Activated CD4-positive, alpha-beta T cell treated with anti-CD3 and anti-CD28 coated beads for 36 hours (primary cell): ENCODE measurements at regions of chr1 and their contacts with region 1.

Region 1: GRCh38 chr1:66607458-66607857 is 73.5 kb downstream of the SGIP1 start:
- DNase-seq: peak; percentile 25
- ATAC-seq: no peak
- H3K4me3 Mint-ChIP-seq: no peak overlapping the region
- H3K27ac Mint-ChIP-seq: no peak overlapping the region
- H3K4me1 Mint-ChIP-seq: no peaks in the 10 kb centered on the region
- H3K27me3 Mint-ChIP-seq: peaks cover 12% of the 10 kb centered on the region

Region 2: GRCh38 chr1:64956733-64957441 is 1650.6 kb before region 1 on chr1:
- CTCF ChIA-PET with region 1: no interaction called
- POLR2A ChIA-PET with region 1: no interaction called
- intact Hi-C with region 1: no loop called
- DNase-seq: peak; percentile 75
- ATAC-seq: peak; percentile 87
- H3K4me3 Mint-ChIP-seq: no peak overlapping the region
- H3K27ac Mint-ChIP-seq: no peak overlapping the region
- H3K4me1 Mint-ChIP-seq: peaks cover 61% of the 10 kb centered on the region
- H3K27me3 Mint-ChIP-seq: no peaks in the 10 kb centered on the region

Region 3: DNA sequence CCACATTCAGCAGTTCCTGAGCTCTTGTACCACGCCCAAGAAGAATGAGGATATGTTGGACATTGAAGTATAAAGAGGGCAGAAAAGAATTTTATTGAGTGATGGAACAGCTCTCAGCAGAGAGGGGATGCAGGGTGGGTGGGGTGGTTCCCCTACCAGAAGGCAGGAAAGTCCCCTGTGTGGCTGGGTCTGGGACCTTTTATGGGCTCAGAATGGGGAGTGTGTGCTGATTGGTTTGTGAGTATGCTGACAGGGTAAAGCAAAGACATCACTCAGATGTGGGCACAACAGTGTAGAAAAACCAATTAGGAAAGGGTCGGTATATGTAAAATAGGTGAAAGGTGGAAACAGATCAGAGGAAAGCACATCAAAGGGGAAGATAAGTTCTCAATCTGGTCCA is 11.3 kb before region 1 on chr1:
- CTCF ChIA-PET with region 1: interaction called, 3 read pairs
- POLR2A ChIA-PET with region 1: no interaction called
- intact Hi-C with region 1: loop called in 1 of 2 experiments (anchors 2 kb)
- DNase-seq: no peak
- ATAC-seq: no peak
- H3K4me3 Mint-ChIP-seq: no peak overlapping the region
- H3K27ac Mint-ChIP-seq: no peak overlapping the region
- H3K4me1 Mint-ChIP-seq: no peaks in the 10 kb centered on the region
- H3K27me3 Mint-ChIP-seq: peaks cover 12% of the 10 kb centered on the region

Region 4: GRCh38 chr1:66624412-66625060 is 17.1 kb after region 1 on chr1:
- CTCF ChIA-PET with region 1: no interaction called
- POLR2A ChIA-PET with region 1: no interaction called
- intact Hi-C with region 1: no loop called
- DNase-seq: no peak
- ATAC-seq: peak; percentile 83
- H3K4me3 Mint-ChIP-seq: no peak overlapping the region
- H3K27ac Mint-ChIP-seq: peak overlapping the region; percentile 44
- H3K4me1 Mint-ChIP-seq: peaks cover 15% of the 10 kb centered on the region
- H3K27me3 Mint-ChIP-seq: peaks cover 3% of the 10 kb centered on the region

Region 5: GRCh38 chr1:66637146-66637545 is 29.7 kb after region 1 on chr1:
- CTCF ChIA-PET with region 1: no interaction called
- POLR2A ChIA-PET with region 1: no interaction called
- intact Hi-C with region 1: no loop called
- DNase-seq: no peak
- ATAC-seq: no peak
- H3K4me3 Mint-ChIP-seq: no peak overlapping the region
- H3K27ac Mint-ChIP-seq: no peak overlapping the region
- H3K4me1 Mint-ChIP-seq: no peaks in the 10 kb centered on the region
- H3K27me3 Mint-ChIP-seq: peaks cover 2% of the 10 kb centered on the region

Region 6: GRCh38 chr1:66685670-66686069 is 78.2 kb after region 1 on chr1:
- CTCF ChIA-PET with region 1: no interaction called
- POLR2A ChIA-PET with region 1: no interaction called
- intact Hi-C with region 1: no loop called
- DNase-seq: no peak
- ATAC-seq: no peak
- H3K4me3 Mint-ChIP-seq: no peak overlapping the region
- H3K27ac Mint-ChIP-seq: no peak overlapping the region
- H3K4me1 Mint-ChIP-seq: no peaks in the 10 kb centered on the region
- H3K27me3 Mint-ChIP-seq: peaks cover 4% of the 10 kb centered on the region